ENCODE measurements at regions of chr9 and their contacts with region 1.

Region 1: DNA sequence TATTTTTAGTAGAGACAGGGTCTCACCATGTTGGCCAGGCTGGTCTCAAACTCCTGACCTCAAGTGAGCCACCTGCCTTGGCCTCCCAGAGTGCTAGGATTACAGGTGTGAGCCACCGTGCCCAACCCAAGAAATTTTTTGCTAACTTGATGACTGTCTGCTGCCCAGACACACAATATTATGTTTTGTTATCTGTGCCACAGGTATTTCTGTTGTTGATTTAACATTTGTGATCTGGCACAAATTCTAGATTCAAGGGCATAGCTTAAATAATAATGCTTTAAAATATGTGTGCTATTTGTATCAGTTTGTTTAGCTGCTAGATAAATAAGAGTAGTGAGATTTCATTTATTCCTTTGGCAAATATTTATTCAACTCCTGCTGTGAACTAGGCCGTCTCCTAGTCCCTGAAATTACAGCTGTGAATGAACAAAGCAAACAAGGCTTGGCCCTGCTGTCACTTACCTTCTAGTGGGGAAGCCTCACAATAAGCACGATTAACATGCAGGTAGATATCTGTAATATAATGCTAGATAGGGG is 35.3 kb downstream of the GAPVD1 start:
- DNase-seq: peak; percentile 95
- ATAC-seq: peak; percentile 98
- H3K4me3 ChIP-seq: peak overlapping the region in 1 of 3 experiments; percentile 7; a peak in 1 of 6 replicates
- H3K27ac ChIP-seq: peak overlapping the region; percentile 57
- H3K4me1 ChIP-seq: peaks cover 33% of the 10 kb centered on the region
- H3K27me3 ChIP-seq: no peaks in the 10 kb centered on the region
- CTCF ChIP-seq: no peak
- EP300 ChIP-seq: peak; percentile 85
- POLR2A ChIP-seq: no peak
- RAD21 ChIP-seq: no peak

Region 2: GRCh38 chr9:125272697-125273096 is 24.2 kb before region 1 on chr9:
- CTCF ChIA-PET with region 1: no interaction called
- POLR2A ChIA-PET with region 1: interaction called, 6 read pairs
- in situ Hi-C with region 1: no loop called
- intact Hi-C with region 1: loop called (anchors 1 kb)
- DNase-seq: peak; percentile 90
- ATAC-seq: peak; percentile 89
- H3K4me3 ChIP-seq: peak overlapping the region in 2 of 3 experiments; percentile 11 to 40; a peak in 2 of 6 replicates
- H3K27ac ChIP-seq: peak overlapping the region; percentile 81
- H3K4me1 ChIP-seq: peaks cover 76% of the 10 kb centered on the region
- H3K27me3 ChIP-seq: no peaks in the 10 kb centered on the region
- CTCF ChIP-seq: no peak
- EP300 ChIP-seq: peak in 1 of 2 experiments; percentile 91; a peak in 2 of 4 replicates
- POLR2A ChIP-seq: no peak
- RAD21 ChIP-seq: no peak

Measured in HepG2 (cell line).